ENCODE measurements at regions of chr6 and their contacts with region 1.

Region 1: DNA sequence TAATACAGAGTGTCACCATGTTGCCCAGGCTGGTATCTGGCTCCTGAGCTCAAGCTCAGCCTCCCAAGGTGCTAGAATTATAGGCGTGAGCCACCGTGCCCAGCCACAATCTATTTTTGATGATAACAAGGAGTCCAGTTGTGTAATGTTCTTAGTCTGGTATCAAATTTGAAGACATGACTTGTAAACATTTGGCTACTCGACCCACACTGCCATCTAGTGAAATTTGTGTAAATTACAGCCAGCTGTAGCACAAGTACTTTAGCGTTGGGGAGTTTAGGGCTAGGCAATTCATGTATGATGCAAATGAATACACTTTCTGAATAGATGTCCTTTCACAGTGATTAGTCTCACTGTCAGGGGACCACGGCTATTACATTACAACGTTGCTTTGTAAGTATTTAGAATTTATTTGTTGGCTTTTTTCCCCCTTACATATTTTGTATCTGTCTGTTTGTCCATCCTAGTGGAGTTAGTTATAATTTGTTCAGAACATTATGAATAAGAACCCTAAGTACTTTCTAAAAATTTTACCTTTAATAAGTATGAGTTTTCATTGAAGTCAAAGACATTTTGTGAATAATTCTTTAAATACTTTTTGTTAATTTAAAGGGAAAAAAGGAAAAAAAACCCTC is 139.7 kb downstream of the PRDM13 start:
- DNase-seq: peak; percentile 68 to 80 (median 72)
- ATAC-seq: peak; percentile 86
- H3K4me3 ChIP-seq: no peak overlapping the region
- H3K27ac ChIP-seq: no peak overlapping the region
- H3K4me1 ChIP-seq: no peaks in the 10 kb centered on the region
- H3K27me3 ChIP-seq: no peaks in the 10 kb centered on the region
- CTCF ChIP-seq: peak; percentile 64 to 92 (median 87)
- POLR2A ChIP-seq: no peak

Region 2: DNA sequence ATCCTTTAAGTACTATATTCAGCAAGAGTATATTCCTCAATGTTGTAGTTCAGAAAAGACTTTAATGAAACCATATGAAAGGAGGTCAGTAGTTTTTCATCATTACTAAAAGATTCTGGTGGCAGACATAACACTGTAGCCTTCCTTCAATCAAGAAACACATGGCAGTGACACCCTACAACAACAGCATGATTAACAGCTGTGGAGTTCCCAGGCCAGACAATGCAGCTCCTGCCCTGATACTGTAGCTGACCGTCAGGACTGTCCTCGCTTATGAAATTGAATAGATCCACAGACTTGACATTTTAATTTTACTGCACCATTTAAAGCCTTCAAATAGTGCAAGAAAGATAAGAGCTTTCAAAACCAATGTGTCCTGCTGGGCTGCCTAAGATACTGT is 274.7 kb before region 1 on chr6:
- intact Hi-C with region 1: loop called (anchors 10 kb)
- DNase-seq: peak in 3 of 4 donors; percentile 33 to 57 (median 40)
- ATAC-seq: peak; percentile 53
- H3K4me3 ChIP-seq: no peak overlapping the region
- H3K27ac ChIP-seq: no peak overlapping the region
- H3K4me1 ChIP-seq: peaks cover 7% of the 10 kb centered on the region
- H3K27me3 ChIP-seq: no peaks in the 10 kb centered on the region
- CTCF ChIP-seq: no peak
- POLR2A ChIP-seq: no peak

Region 3: DNA sequence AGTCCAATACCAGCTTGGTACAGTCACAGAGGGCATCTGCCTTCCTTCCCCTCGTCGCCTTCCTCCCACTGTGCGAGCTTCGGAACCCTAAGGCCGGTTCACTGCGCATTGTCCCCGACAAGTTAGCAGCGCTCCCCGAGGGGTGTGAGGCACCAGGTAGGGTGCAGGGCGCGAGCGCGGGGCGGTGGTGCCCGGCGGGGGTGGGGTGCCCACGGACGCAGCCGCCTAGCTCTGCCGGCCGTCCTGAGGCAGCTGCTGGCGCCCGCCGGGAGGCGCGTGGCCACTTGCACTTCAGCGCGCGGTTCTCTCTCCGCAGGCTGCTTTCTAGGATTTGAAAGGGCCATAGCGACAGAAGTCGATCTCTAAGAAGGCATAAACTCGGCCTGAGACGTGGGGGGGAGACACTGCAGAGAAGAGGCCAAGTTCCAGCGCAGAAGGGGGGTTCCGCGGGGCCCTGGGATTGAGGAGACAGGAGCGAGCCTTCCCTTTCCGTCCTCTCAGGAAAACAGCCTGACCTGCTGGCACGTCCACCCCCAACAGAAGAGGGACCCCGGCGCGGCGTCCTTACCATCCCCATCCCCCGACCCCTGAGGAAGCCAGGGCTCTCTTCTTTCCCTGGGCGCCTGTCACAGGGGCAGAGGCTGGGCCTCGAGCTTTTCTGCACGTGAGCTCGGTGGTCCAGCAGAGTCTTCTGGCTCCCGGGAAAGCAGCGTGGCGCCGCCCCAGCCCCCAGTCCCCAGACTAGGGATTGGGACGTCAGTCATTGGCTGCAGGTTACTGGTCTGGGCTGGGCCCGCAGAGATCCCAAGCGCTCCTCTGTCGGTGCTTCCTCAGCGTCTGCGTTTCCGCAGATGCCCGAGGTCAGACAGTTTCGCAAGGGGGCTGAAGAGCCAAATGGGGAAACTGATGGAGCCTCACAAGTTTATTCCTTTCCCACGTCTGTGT is 155.4 kb before region 1 on chr6:
- intact Hi-C with region 1: loop called (anchors 10 kb)
- DNase-seq: no peak
- ATAC-seq: no peak
- H3K4me3 ChIP-seq: no peak overlapping the region
- H3K27ac ChIP-seq: no peak overlapping the region
- H3K4me1 ChIP-seq: peaks cover 26% of the 10 kb centered on the region
- H3K27me3 ChIP-seq: peaks cover 0 to 34% of the 10 kb centered on the region in 2 donors
- CTCF ChIP-seq: no peak
- POLR2A ChIP-seq: no peak